Mammary epithelial cell (primary cell): ENCODE measurements at regions of chr12 and their contacts with region 1.

Region 1: GRCh38 chr12:3190101-3190500 is 112.9 kb downstream of the TSPAN9 start:
- DNase-seq: no peak
- H3K4me3 ChIP-seq: no peak overlapping the region
- H3K27ac ChIP-seq: no peak overlapping the region
- H3K4me1 ChIP-seq: no peaks in the 10 kb centered on the region
- H3K27me3 ChIP-seq: no peaks in the 10 kb centered on the region
- CTCF ChIP-seq: no peak

Region 2: DNA sequence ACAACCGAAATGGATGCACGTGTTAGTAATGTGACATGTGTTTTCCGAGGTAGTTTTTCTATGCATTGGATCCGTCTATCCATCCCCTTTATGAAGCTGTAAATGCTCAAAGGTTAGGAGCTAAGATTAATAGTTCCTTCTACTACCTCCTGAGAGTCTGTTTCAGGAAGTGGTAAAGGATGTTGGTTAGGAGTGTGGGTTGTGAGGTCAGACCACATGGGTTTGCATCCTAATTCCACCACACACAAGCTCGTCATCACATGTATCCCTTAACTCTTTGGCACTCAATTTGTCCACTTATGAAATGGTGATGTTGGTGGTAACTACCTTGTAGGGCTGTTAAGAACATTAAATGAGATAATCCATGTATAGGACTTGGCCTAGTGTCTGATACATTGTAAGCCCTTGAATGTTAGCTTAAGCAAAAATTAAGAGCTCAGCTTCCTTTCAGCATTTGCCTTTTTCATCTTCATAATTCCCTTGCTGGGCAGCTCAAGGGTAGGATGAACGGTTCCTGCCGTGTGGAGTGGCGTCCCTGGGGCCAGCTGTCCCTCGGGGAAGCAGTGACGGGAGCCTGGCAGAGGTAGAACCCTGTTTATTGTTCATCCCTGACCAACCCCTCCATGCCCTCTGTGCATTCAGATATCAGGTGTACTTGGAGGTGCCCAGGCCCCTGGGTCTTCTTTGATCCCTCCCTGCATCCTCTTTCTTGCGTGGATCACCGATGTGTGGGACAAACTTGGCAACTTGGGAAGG is 60.6 kb before region 1 on chr12:
- CTCF ChIA-PET with region 1: no interaction called
- dilution Hi-C with region 1: loop called (anchors 5 kb)
- in situ Hi-C with region 1: no loop called
- intact Hi-C with region 1: no loop called
- DNase-seq: peak; percentile 78
- H3K4me3 ChIP-seq: no peak overlapping the region
- H3K27ac ChIP-seq: no peak overlapping the region
- H3K4me1 ChIP-seq: peaks cover 21% of the 10 kb centered on the region
- H3K27me3 ChIP-seq: no peaks in the 10 kb centered on the region
- CTCF ChIP-seq: no peak

Region 3: GRCh38 chr12:3231399-3231876 is 41.3 kb after region 1 on chr12:
- CTCF ChIA-PET with region 1: no interaction called
- dilution Hi-C with region 1: loop called (anchors 5 kb)
- in situ Hi-C with region 1: no loop called
- intact Hi-C with region 1: no loop called
- DNase-seq: no peak
- H3K4me3 ChIP-seq: no peak overlapping the region
- H3K27ac ChIP-seq: no peak overlapping the region
- H3K4me1 ChIP-seq: no peaks in the 10 kb centered on the region
- H3K27me3 ChIP-seq: no peaks in the 10 kb centered on the region
- CTCF ChIP-seq: no peak

Region 4: DNA sequence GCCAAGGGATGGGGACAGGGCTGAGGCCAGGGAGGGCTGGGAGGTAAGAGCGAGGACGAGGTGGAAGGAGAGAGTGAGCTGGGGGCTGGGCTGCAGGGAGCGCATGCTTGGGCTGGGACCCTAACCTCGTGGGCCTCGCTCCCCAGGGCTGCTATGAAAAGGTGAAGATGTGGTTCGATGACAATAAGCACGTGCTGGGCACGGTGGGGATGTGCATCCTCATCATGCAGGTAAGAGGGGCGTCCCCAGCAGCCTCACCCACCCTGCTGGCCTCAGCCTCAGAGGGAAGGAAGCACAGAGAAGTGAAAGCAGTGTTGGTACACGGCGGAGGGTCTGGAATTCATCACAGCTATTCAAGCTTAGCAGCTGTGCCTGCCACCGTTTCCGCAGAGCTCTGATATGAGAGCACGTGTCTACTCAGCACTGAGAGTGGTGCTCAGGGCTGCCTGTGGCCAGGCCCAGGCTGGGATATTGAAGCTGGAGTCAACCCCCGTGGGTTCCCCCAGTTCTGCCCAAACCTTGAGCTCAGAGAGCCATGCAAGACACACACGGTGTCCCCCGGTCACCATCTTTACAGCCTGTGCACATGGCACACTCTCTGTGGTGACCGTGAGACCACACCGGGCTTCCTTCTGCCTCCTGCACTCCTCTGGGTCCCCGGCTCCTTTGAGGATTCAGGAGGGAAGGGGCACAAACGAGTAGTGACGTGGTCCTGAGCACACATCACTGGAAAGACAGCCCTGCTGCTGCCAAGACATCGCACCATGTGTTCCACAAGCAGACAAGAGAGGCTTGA is 91.7 kb after region 1 on chr12:
- CTCF ChIA-PET with region 1: no interaction called
- dilution Hi-C with region 1: no loop called
- in situ Hi-C with region 1: no loop called
- intact Hi-C with region 1: no loop called
- DNase-seq: no peak
- H3K4me3 ChIP-seq: no peak overlapping the region
- H3K27ac ChIP-seq: no peak overlapping the region
- H3K4me1 ChIP-seq: no peaks in the 10 kb centered on the region
- H3K27me3 ChIP-seq: no peaks in the 10 kb centered on the region
- CTCF ChIP-seq: no peak

Region 5: DNA sequence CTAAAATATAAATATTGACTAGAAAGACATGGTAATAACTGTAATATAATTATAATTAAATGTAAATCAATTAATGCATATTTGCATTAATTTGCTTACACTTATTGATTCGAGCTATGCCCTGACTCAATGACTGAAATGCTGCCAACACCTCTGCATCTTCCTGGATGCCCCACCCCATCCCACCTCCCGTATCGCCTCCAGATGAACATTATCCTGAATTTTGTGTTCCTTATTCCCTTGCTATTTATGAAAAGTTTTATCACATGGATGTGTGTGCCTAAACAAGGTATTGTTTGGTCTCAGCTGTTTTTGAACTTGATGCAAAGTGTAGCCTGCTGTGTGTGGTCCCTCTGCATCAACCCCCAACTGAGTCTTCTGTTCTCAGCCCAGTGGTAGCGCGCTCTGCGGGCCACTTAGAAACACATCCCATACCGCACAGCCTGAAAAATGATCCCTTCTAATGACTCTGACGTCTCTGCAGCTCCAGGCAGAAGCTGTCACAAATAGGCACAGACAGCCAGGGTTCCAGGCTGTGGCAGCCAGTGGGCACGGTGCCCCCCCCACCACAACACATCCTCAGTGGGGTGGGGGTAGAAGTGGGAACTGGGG is 397.4 kb after region 1 on chr12:
- CTCF ChIA-PET with region 1: no interaction called
- dilution Hi-C with region 1: no loop called
- in situ Hi-C with region 1: no loop called
- intact Hi-C with region 1: no loop called
- DNase-seq: no peak
- H3K4me3 ChIP-seq: no peak overlapping the region
- H3K27ac ChIP-seq: no peak overlapping the region
- H3K4me1 ChIP-seq: no peaks in the 10 kb centered on the region
- H3K27me3 ChIP-seq: no peaks in the 10 kb centered on the region
- CTCF ChIP-seq: no peak